ENCODE measurements at regions of chr3 and their contacts with region 1.

Region 1: DNA sequence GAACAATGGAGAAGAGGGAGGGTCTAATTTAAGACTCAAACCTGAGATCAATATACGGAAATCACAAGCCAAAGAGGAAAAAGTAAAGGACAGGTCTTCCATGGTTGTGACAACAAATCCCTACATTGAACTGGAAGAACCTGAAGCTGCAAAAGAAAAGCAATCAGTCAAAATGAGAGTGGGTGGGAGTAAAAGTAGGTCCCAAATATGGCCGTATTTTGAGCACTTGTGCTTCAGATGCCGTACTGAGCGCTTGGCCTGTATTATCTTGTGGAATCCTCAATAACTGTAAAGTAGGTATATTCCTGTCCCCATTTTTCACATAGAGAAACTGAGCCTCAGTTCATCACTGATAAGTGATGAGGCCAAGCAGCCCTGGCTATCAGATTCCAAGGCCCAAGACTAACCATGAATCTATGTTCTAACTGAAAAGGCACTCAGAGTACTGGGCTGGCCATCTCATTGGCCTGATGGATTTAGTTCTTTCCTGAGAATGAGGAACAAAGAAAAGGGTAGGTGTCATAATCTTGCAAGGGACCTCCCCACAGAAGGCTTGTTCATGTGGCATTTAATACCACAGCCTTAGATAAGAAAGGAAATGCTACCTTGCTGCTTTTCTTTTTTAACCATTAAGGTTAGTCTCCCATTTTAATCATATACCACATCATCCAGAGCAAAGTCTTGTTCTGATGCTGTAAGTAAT is 52.5 kb downstream of the LRRN1 start:
- DNase-seq: no peak
- H3K4me3 ChIP-seq: no peak overlapping the region
- CTCF ChIP-seq: no peak

Region 2: DNA sequence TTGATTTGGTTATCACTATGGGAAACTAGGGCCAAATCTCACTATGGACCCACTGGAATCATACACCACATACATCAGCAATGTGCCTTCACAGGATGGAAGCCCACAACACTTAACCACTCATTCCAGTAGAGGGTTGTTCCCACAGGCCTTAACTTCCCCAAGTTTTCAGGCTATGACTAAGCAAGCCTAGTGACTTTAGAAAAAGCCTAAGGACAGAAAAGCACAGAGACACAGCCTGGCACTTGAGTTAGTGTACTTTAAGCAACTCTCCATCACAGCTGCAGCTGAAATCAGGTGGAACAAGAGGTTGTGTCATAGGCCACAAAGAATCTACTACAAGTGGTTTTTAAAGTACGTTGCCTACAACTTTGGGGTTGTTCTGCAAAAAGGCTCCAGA is 76.2 kb after region 1 on chr3:
- in situ Hi-C with region 1: loop called (anchors 10 kb)
- DNase-seq: no peak
- H3K4me3 ChIP-seq: no peak overlapping the region
- CTCF ChIP-seq: no peak

Measured in astrocyte of the cerebellum (primary cell).